GM12878 (cell line): ENCODE measurements at regions of chr6 and their contacts with region 1.

Region 1: DNA sequence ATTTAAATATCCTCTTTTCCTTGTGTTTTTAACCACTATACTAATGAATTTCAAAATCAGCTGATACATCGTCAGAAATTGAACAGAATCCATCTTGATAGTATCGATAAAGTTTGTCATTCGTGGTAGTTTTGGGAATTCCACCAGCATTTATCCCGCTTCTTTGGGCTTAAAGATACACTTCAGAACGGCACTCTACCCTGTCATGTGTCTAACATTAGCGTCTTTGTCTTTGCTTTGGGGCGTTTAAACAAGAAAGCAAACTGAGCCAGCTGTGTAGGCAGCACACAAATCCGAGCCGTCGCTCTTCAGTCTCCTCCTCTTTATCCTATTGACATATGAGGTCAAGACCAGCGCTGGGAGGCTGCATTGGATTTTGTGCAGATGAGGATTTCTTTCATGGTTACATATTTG is 27.5 kb upstream of the NHSL1 start:
- DNase-seq: no peak
- ATAC-seq: no peak
- H3K4me3 ChIP-seq: no peak overlapping the region
- H3K27ac ChIP-seq: no peak overlapping the region
- H3K4me1 ChIP-seq: no peaks in the 10 kb centered on the region
- H3K27me3 ChIP-seq: no peaks in the 10 kb centered on the region
- CTCF ChIP-seq: no peak
- EP300 ChIP-seq: no peak
- POLR2A ChIP-seq: no peak
- RAD21 ChIP-seq: no peak

Region 2: DNA sequence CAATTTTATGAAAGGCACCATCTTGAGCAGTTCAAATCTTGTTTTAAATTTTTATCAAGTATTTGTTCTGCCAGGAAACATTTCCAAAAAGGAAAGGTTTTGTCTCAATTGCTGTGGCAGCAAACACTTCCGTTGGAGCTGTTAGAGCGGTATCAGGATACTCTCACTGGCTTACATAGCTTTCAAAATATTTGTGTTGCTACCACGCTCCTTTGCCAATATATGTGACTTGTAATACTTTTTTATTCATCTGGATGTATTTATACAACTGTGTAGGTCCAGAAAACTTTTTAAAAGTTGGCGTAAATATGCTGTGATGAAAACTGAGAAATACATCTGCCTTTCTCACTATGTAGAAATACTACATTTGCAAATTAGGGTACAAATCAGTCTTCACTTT is 10.3 kb after region 1 on chr6:
- CTCF ChIA-PET with region 1: interaction called, 25 read pairs
- POLR2A ChIA-PET with region 1: interaction called, 8 read pairs
- RAD21 ChIA-PET with region 1: interaction called, 5 read pairs
- SMC1A ChIA-PET with region 1: interaction called, 7 read pairs
- in situ Hi-C with region 1: no loop called
- intact Hi-C with region 1: no loop called
- DNase-seq: no peak
- ATAC-seq: no peak
- H3K4me3 ChIP-seq: no peak overlapping the region
- H3K27ac ChIP-seq: no peak overlapping the region
- H3K4me1 ChIP-seq: no peaks in the 10 kb centered on the region
- H3K27me3 ChIP-seq: no peaks in the 10 kb centered on the region; a peak in 1 of 4 replicates
- CTCF ChIP-seq: no peak
- EP300 ChIP-seq: no peak
- POLR2A ChIP-seq: no peak
- RAD21 ChIP-seq: no peak